ENCODE measurements at regions of chr6 and their contacts with region 1.

Region 1: GRCh38 chr6:132830334-132830751 is 16.0 kb downstream of the RPS12 start:
- DNase-seq: no peak
- H3K4me3 ChIP-seq: no peak overlapping the region
- H3K27ac ChIP-seq: no peak overlapping the region
- H3K4me1 ChIP-seq: no peaks in the 10 kb centered on the region
- H3K27me3 ChIP-seq: no peaks in the 10 kb centered on the region
- CTCF ChIP-seq: peak; percentile 85

Region 2: DNA sequence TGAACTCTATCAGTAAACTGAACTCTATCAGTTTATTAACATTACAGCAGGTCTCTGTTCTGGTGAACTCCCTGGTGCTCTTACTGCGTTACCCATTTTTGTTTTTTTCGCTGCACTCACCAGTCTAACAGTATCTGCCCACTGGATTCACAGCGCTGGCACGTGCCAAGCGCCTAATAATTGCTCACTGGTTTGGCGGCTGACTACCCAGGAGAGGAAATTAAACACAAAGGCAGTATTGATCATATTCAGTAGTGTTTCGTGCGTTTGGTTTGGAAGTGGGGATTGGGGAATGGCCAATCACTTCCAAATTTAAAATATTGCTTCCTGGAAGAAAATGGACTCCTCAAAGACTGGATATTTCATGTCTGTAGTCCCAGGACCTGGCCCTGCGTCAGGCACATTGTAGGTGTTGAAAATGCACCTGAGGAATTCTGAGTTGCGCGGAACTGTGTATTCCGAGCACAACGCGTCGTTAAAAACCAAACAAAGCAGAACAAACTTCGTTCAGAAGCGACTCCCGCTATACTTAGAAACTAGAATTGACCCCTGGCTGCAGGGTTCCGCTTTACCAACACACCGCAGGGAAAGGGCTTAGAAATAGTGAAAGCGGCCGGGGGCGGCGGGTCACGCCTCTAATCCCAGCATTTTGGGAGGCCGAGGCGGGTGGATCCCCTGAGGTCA is 17.0 kb before region 1 on chr6:
- CTCF ChIA-PET with region 1: no interaction called
- POLR2A ChIA-PET with region 1: interaction called, 11 read pairs
- intact Hi-C with region 1: no loop called
- DNase-seq: peak in 1 of 2 experiments; percentile 59
- H3K4me3 ChIP-seq: peak overlapping the region; percentile 84
- H3K27ac ChIP-seq: peak overlapping the region; percentile 89
- H3K4me1 ChIP-seq: peaks cover 36% of the 10 kb centered on the region
- H3K27me3 ChIP-seq: no peaks in the 10 kb centered on the region
- CTCF ChIP-seq: no peak

Region 3: GRCh38 chr6:133040094-133040802 is 209.9 kb after region 1 on chr6:
- CTCF ChIA-PET with region 1: no interaction called
- POLR2A ChIA-PET with region 1: no interaction called
- intact Hi-C with region 1: loop called (anchors 10 kb)
- DNase-seq: peak in 1 of 2 experiments; percentile 10
- H3K4me3 ChIP-seq: no peak overlapping the region
- H3K27ac ChIP-seq: no peak overlapping the region
- H3K4me1 ChIP-seq: no peaks in the 10 kb centered on the region
- H3K27me3 ChIP-seq: no peaks in the 10 kb centered on the region
- CTCF ChIP-seq: peak; percentile 71

Region 4: GRCh38 chr6:133208183-133208755 is 377.9 kb after region 1 on chr6:
- CTCF ChIA-PET with region 1: no interaction called
- POLR2A ChIA-PET with region 1: no interaction called
- intact Hi-C with region 1: no loop called
- DNase-seq: no peak
- H3K4me3 ChIP-seq: no peak overlapping the region
- H3K27ac ChIP-seq: no peak overlapping the region
- H3K4me1 ChIP-seq: no peaks in the 10 kb centered on the region
- H3K27me3 ChIP-seq: no peaks in the 10 kb centered on the region
- CTCF ChIP-seq: no peak

Region 5: GRCh38 chr6:133512410-133513016 is 682.2 kb after region 1 on chr6:
- CTCF ChIA-PET with region 1: no interaction called
- POLR2A ChIA-PET with region 1: no interaction called
- intact Hi-C with region 1: loop called (anchors 1 kb)
- DNase-seq: peak in 1 of 2 experiments; percentile 45
- H3K4me3 ChIP-seq: no peak overlapping the region
- H3K27ac ChIP-seq: no peak overlapping the region
- H3K4me1 ChIP-seq: no peaks in the 10 kb centered on the region
- H3K27me3 ChIP-seq: no peaks in the 10 kb centered on the region
- CTCF ChIP-seq: peak; percentile 93

Region 6: DNA sequence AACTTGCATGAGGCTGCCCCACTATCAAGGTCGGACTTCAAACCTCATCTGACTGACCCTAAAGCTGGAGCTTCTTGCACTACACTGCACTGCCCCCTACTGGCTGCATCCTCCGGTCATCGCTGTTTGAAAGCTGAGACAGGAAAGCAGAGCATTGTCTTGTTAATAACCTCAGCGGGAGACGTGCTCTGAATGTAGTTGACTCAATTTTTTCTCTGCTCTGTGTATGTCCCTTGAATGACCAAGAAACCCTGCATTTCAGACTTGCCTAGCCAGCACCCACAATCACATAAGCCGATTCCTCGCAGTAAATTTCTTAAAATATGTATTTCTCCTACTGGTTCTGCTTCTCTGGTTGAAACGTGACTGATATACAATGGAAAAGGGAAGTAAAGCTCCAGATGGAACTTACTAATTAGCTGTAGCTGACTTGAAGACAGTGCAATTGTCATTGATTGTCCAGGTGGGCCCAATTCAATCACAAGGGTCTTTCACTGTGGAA is 1086.4 kb after region 1 on chr6:
- CTCF ChIA-PET with region 1: interaction called, 3 read pairs
- POLR2A ChIA-PET with region 1: no interaction called
- intact Hi-C with region 1: loop called (anchors 2 kb)
- DNase-seq: peak; percentile 71 to 82
- H3K4me3 ChIP-seq: peak overlapping the region; percentile 6; the same call in 1 of the 2 replicates
- H3K27ac ChIP-seq: no peak overlapping the region
- H3K4me1 ChIP-seq: no peaks in the 10 kb centered on the region
- H3K27me3 ChIP-seq: no peaks in the 10 kb centered on the region
- CTCF ChIP-seq: peak; percentile 100